ENCODE measurements at regions of chr3 and their contacts with region 1.

Region 1: GRCh38 chr3:97719156-97719821 is 45.3 kb upstream of the ARL6 start:
- DNase-seq: no peak
- H3K4me3 ChIP-seq: peak overlapping the region in 2 of 4 donors; percentile 6 to 44
- H3K27ac ChIP-seq: no peak overlapping the region
- H3K4me1 ChIP-seq: no peaks in the 10 kb centered on the region
- H3K27me3 ChIP-seq: no peaks in the 10 kb centered on the region
- CTCF ChIP-seq: peak; percentile 73 to 94 (median 84)
- EP300 ChIP-seq: no peak
- POLR2A ChIP-seq: no peak

Region 2: DNA sequence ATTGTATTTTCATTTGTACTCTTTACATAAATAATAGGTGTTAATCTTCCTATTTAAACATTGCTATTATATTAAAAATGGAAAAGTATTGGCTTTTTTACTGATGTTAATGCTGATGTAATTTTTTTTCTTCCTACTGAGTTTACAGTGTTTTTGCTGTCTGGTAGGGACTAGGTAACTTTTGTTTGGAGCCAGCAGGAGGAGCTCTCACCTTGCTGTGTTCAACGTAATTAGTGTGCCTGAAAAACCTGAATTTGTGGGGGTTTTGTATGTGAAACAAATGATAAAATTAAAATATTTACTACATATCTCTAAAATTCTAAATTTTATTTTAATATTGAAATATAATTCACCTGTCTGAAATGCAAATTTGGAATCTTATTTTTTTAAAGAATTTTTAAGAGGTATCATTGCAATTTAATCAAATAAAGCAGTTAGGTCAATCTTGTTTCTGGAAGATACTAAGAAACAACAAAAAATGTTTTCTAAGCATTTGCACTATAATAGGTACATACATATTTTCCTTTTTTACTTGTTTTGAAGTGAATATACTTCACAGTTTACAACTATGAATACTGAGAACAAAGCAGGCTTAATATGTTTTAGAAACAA is 856.1 kb before region 1 on chr3:
- intact Hi-C with region 1: loop called (anchors 5 kb)
- DNase-seq: no peak
- H3K4me3 ChIP-seq: no peak overlapping the region
- H3K27ac ChIP-seq: no peak overlapping the region
- H3K4me1 ChIP-seq: no peaks in the 10 kb centered on the region
- H3K27me3 ChIP-seq: no peaks in the 10 kb centered on the region
- CTCF ChIP-seq: peak; percentile 54 to 66 (median 54)
- EP300 ChIP-seq: no peak
- POLR2A ChIP-seq: no peak

Region 3: DNA sequence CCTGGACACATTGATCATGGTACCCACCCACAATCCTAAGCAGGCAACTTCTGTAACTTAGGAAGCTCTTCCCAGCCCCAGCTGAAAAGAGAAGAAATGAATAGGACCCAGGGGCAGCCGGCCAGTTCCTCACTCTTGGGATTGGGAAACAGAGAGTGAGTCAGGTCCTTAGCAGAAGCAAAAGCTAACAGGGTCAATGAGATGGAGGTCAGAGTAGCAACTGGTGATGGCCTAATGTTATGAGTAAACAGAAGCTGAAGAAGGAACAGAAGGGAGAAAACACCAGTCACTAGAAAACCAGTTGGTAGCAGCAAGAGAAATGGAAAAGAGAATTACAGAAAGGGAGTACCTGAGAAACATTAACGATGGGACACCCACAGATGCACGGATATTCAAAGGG is 233.0 kb after region 1 on chr3:
- intact Hi-C with region 1: no loop called
- DNase-seq: no peak
- H3K4me3 ChIP-seq: no peak overlapping the region
- H3K27ac ChIP-seq: no peak overlapping the region
- H3K4me1 ChIP-seq: no peaks in the 10 kb centered on the region
- H3K27me3 ChIP-seq: no peaks in the 10 kb centered on the region
- CTCF ChIP-seq: no peak
- EP300 ChIP-seq: no peak
- POLR2A ChIP-seq: no peak

Measured in esophagus muscularis mucosa (tissue), 4 donors.